Tibial artery (tissue), 4 donors: ENCODE measurements at regions of chr17 and their contacts with region 1.

Region 1: GRCh38 chr17:17496189-17497064 is at the start of gene RASD1:
- DNase-seq: peak; percentile 83 to 94
- H3K4me3 ChIP-seq: peak within 1 kb of the TSS; percentile 58 to 80
- H3K27ac ChIP-seq: peak within 1 kb of the TSS; percentile 57 to 76
- H3K4me1 ChIP-seq: peaks cover 0 to 35% (median 19%) of the 10 kb centered on the region in 4 donors
- H3K27me3 ChIP-seq: no peaks in the 10 kb centered on the region
- CTCF ChIP-seq: peak; percentile 93 to 94

Region 2: GRCh38 chr17:17568749-17569195 is 72.3 kb after region 1 on chr17:
- intact Hi-C with region 1: loop called (anchors 5 kb)
- DNase-seq: no peak
- H3K4me3 ChIP-seq: no peak overlapping the region
- H3K27ac ChIP-seq: no peak overlapping the region
- H3K4me1 ChIP-seq: peaks cover 12 to 52% (median 37%) of the 10 kb centered on the region in 4 donors
- H3K27me3 ChIP-seq: no peaks in the 10 kb centered on the region
- CTCF ChIP-seq: peak; percentile 56

Region 3: GRCh38 chr17:17591355-17592298 is 95.2 kb after region 1 on chr17 and contains the start of gene PEMT:
- intact Hi-C with region 1: loop called (anchors 5 kb)
- DNase-seq: peak; percentile 98
- H3K4me3 ChIP-seq: peak within 1 kb of the TSS; percentile 62 to 69
- H3K27ac ChIP-seq: peak within 1 kb of the TSS; percentile 75 to 81
- H3K4me1 ChIP-seq: peaks cover 0 to 27% (median 20%) of the 10 kb centered on the region in 4 donors
- H3K27me3 ChIP-seq: no peaks in the 10 kb centered on the region
- CTCF ChIP-seq: no peak

Region 4: GRCh38 chr17:17605729-17606088 is 109.3 kb after region 1 on chr17:
- intact Hi-C with region 1: no loop called
- DNase-seq: no peak
- H3K4me3 ChIP-seq: no peak overlapping the region
- H3K27ac ChIP-seq: no peak overlapping the region
- H3K4me1 ChIP-seq: no peaks in the 10 kb centered on the region
- H3K27me3 ChIP-seq: peaks cover 0 to 3% of the 10 kb centered on the region in 2 donors
- CTCF ChIP-seq: no peak

Region 5: GRCh38 chr17:17641621-17642409 is 145.4 kb after region 1 on chr17:
- intact Hi-C with region 1: loop called (anchors 2 kb)
- DNase-seq: peak; percentile 64 to 84
- H3K4me3 ChIP-seq: no peak overlapping the region
- H3K27ac ChIP-seq: no peak overlapping the region
- H3K4me1 ChIP-seq: no peaks in the 10 kb centered on the region
- H3K27me3 ChIP-seq: peaks cover 0 to 28% of the 10 kb centered on the region in 2 donors
- CTCF ChIP-seq: peak; percentile 87 to 88

Region 6: DNA sequence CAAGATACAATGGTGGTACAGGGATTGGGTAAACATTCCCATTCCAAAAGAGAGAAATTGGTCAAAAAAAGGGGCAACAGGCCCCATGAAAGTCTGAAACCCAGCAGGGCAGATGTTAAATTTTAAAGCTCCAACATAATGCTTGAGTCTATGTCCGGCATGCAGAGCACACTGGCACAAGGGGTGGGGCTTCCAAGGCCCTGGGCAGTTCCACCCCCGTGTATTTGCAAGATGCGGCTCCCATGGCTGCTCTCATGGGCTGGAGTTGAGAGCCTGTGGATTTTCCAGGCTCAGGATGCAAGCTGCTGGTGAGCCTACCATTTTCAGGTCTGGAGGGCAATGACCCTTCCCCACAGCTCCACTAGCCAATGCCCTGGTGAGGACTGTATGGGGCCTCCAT is 156.9 kb after region 1 on chr17:
- intact Hi-C with region 1: no loop called
- DNase-seq: no peak
- H3K4me3 ChIP-seq: no peak overlapping the region
- H3K27ac ChIP-seq: no peak overlapping the region
- H3K4me1 ChIP-seq: no peaks in the 10 kb centered on the region
- H3K27me3 ChIP-seq: no peaks in the 10 kb centered on the region
- CTCF ChIP-seq: no peak